Activated naive CD4-positive, alpha-beta T cell treated with anti-CD3 and anti-CD28 coated beads for 36 hours (primary cell): ENCODE measurements at regions of chr2 and their contacts with region 1.

Region 1: DNA sequence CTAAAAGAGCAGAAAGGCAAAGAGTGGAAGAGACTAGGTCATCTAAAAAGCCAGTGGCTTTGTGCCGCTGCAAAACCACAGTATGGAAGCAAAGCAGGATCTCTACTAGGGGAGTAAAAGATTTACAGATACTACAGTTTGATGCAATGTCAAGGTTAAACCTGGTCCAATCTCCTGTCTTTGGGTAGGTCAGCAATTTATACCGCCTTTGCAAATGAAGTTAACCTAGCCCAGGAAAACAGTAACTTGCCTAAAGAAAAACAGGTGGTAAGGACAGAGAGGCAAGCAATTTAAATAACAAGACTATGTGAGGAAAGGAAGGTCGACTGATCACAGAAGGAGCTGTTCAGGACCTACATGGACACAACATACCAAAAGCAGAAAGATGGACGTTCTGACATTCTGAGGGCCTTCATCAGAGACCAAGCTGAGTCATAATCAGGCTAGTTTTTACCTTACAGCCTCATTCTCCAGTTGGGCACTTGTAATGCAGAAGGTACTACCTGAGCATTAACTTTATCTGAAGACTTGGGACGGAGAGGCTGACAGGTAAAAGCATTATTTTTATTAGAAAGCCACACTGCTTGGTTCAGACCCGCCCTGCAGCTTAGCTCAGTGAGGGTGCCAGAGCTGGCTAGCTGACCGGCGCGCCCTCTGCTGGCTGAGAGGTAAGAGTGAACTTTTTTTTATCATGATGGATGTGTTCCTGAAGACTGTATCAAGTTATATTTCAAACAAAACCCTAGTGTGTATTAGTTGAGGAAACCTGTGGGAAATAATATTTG is 15.9 kb downstream of the CDKL4 start:
- DNase-seq: peak; percentile 89
- H3K4me3 Mint-ChIP-seq: peak overlapping the region; percentile 66
- H3K27ac Mint-ChIP-seq: no peak overlapping the region
- H3K4me1 Mint-ChIP-seq: peaks cover 15% of the 10 kb centered on the region
- H3K27me3 Mint-ChIP-seq: no peaks in the 10 kb centered on the region

Region 2: DNA sequence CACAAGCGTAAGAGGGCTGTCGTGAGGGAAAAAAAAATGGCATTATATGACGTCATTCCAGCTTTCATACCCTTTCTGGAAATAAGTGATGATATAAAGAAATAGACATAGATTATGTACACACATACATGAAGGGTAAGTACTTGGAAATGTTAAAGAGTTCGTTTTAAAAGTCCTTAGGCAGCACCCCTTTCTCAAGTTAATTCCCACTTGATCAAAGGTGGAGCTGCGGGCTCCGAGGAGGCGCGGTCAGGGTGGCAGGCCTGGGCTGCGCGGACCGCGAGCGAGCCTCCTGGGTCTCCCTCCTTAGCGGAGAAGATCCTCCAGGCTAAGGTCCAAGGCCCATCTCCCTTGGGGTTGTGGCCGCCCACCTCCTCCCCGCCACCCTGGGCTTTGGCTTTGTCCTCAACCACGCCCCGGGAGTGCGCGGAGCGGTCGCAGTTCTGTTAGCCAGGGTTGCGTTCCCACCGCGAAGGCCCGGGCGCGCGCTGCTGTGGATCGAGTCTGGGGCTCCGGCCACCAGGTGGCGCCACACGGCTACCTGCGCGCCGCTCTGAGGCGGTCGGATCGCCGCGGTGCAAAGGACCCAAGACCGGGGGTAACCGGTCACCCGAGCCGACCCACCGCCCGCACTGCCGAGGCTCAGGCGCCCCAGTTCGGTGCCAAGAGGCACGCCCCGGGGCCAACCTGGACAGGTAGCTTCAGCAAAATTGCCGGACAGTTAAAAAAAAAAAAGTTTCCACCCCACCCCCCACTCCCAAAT is 691.9 kb before region 1 on chr2:
- CTCF ChIA-PET with region 1: no interaction called
- intact Hi-C with region 1: loop called (anchors 5 kb)
- DNase-seq: peak; percentile 84
- H3K4me3 Mint-ChIP-seq: peak overlapping the region; percentile 54
- H3K27ac Mint-ChIP-seq: no peak overlapping the region
- H3K4me1 Mint-ChIP-seq: no peaks in the 10 kb centered on the region
- H3K27me3 Mint-ChIP-seq: peaks cover 5% of the 10 kb centered on the region

Region 3: DNA sequence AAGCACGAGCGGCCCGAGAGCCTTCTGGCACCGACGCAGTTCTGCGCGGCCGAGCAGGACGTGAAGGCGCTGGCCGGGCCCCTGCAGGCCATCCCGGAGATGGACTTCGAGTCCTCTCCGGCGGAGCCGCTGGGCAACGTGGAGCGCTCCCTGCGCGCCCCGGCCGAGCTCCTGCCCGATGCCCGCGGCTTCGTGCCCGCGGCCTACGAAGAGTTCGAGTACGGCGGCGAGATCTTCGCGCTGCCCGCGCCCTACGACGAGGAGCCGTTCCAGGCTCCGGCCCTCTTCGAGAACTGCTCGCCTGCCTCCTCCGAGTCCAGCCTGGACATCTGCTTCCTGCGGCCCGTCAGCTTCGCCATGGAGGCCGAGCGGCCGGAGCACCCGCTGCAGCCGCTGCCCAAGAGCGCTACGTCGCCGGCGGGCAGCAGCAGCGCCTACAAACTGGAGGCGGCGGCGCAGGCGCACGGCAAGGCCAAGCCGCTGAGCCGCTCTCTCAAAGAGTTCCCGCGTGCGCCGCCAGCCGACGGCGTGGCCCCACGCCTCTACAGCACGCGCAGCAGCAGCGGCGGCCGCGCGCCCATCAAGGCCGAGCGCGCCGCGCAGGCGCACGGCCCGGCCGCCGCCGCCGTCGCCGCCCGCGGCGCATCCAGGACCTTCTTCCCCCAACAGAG is 267.7 kb before region 1 on chr2:
- CTCF ChIA-PET with region 1: interaction called, 7 read pairs
- intact Hi-C with region 1: loop called (anchors 5 kb)
- DNase-seq: peak; percentile 74
- H3K4me3 Mint-ChIP-seq: peak overlapping the region; percentile 52
- H3K27ac Mint-ChIP-seq: no peak overlapping the region
- H3K4me1 Mint-ChIP-seq: no peaks in the 10 kb centered on the region
- H3K27me3 Mint-ChIP-seq: peaks cover 12% of the 10 kb centered on the region

Region 4: DNA sequence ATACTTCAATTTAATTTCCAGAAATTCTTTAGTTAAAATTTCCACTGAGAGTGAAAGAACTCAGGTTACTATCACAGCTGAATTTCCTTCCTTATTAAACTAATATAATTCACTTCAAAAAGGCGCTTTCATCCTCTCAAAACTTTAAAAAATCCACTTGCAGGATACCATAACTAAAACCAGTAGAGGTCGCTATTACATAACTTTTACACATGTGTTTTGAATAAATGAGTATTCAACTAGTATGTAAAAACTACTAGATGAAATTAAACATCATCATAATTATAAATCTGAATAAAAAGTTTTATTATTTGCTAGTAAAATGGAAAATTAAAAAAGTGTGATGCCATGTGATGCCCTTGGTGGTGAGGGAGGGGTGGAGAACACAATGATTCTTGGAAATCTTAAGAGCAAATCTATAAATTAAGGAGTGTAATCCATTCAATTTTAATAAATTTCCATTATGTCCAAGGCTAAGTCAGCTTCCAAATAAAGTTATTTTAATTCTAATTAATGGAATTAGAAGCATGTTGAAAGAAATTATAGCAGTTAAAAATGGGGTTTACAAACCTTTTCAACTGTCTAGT is 168.4 kb before region 1 on chr2:
- CTCF ChIA-PET with region 1: interaction called, 250 read pairs
- intact Hi-C with region 1: loop called (anchors 1 kb)
- DNase-seq: no peak
- H3K4me3 Mint-ChIP-seq: no peak overlapping the region
- H3K27ac Mint-ChIP-seq: no peak overlapping the region
- H3K4me1 Mint-ChIP-seq: peaks cover 2% of the 10 kb centered on the region
- H3K27me3 Mint-ChIP-seq: no peaks in the 10 kb centered on the region

Region 5: GRCh38 chr2:39099870-39100728 is 127.7 kb before region 1 on chr2:
- CTCF ChIA-PET with region 1: interaction called, 9 read pairs
- intact Hi-C with region 1: loop called (anchors 1 kb)
- DNase-seq: peak; percentile 38
- H3K4me3 Mint-ChIP-seq: no peak overlapping the region
- H3K27ac Mint-ChIP-seq: peak overlapping the region; percentile 75
- H3K4me1 Mint-ChIP-seq: peaks cover 47% of the 10 kb centered on the region
- H3K27me3 Mint-ChIP-seq: no peaks in the 10 kb centered on the region

Region 6: GRCh38 chr2:39243476-39244123 is 15.8 kb after region 1 on chr2 and contains the start of gene CDKL4:
- CTCF ChIA-PET with region 1: interaction called, 19 read pairs
- intact Hi-C with region 1: no loop called
- DNase-seq: peak; percentile 57
- H3K4me3 Mint-ChIP-seq: peak within 1 kb of the TSS; percentile 79
- H3K27ac Mint-ChIP-seq: no peak within 1 kb of the TSS
- H3K4me1 Mint-ChIP-seq: peaks cover 15% of the 10 kb centered on the region
- H3K27me3 Mint-ChIP-seq: no peaks in the 10 kb centered on the region
- total RNA-seq, gene CDKL4: not detected

Region 7: DNA sequence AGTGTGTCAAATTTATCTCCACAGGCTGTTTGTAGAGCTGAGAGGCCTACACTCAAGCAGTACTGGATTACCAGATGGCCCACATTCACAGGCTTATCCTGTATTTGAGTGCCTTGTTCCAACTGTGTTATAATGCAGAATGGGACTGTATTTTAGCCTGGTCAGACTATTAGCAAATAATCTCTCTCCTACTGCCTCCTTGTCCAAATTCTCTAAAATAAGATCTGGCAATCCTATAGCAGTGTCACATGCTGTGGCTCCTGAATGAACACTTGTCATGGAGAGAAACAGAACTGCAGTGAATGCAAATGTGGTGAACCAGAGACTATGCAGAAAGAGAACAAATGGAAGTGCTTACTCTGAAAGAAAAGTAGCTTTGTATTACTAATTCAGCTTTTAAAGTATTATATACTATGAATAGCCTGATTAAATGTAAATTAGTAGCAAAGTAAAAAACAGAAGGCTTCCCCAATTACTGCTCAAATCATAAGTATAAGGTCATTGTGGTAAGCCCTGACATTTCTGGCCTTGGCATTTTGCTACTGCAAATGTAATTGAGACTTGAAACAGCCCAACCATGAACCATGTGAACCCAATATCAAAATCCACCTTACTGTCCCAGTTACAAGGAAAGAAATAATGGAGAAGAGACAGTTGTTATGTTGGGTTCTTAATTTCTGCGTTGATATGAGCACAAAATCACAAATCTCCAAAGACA is 129.3 kb after region 1 on chr2:
- CTCF ChIA-PET with region 1: no interaction called
- intact Hi-C with region 1: no loop called
- DNase-seq: no peak
- H3K4me3 Mint-ChIP-seq: no peak overlapping the region
- H3K27ac Mint-ChIP-seq: no peak overlapping the region
- H3K4me1 Mint-ChIP-seq: no peaks in the 10 kb centered on the region
- H3K27me3 Mint-ChIP-seq: no peaks in the 10 kb centered on the region